CD8-positive, alpha-beta T cell (primary cell): ENCODE measurements at regions of chr9 and their contacts with region 1.

Region 1: GRCh38 chr9:20941174-20941690 is 90.2 kb downstream of the HACD4 start:
- DNase-seq: peak; percentile 4 to 80 (median 45)
- ATAC-seq: peak; percentile 90
- H3K4me3 ChIP-seq: no peak overlapping the region
- H3K4me3 Mint-ChIP-seq: no peak overlapping the region
- H3K27ac ChIP-seq: no peak overlapping the region
- H3K27ac Mint-ChIP-seq: no peak overlapping the region
- H3K4me1 ChIP-seq: peaks cover 3% of the 10 kb centered on the region
- H3K4me1 Mint-ChIP-seq: peaks cover 3% of the 10 kb centered on the region
- H3K27me3 ChIP-seq: no peaks in the 10 kb centered on the region
- H3K27me3 Mint-ChIP-seq: no peaks in the 10 kb centered on the region
- CTCF ChIP-seq: peak; percentile 82

Region 2: DNA sequence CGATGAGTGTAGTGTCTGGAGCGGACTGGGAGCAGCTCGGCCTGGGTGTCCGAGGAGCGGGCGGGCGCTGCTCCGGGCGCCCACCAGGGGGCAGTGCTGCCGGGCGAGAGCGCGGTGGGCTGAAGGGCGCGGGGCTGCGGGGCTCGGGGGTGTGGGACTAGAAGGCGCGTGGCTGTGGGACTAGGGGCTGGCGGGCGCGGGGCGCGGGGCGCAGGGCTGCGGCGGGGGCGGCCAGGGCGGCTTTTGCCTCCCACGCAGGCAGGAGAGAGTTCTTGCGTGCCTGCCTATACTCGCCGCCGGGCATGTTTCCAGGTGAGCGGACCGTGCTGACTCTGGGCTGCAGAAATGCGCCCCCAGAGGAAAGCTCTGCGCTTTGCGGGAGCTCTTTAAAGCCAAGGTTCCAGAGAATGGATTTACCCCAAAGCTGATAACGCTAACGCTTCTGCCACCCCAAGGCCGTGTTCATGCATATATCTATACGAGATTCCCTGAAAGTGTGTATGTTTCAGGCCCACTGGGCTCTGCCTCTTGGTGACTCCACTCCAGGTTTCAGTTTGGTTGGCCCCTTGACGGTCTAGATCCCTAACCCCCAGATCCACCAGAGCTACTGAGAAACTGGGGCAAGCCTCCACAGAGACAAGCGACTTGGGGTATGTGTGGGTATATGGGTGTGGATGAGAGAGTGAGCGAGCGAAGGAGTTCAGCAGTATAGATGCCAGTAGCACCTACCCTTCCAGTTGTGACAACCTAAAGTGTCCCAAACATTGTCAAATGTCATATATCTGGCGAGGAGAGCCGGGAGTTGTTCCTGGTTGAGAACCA is 1476.3 kb before region 1 on chr9:
- CTCF ChIA-PET with region 1: interaction called, 3 read pairs
- POLR2A ChIA-PET with region 1: no interaction called
- intact Hi-C with region 1: loop called in 1 of 2 experiments (anchors 10 kb)
- DNase-seq: peak; percentile 44 to 83 (median 71)
- ATAC-seq: peak; percentile 91
- H3K4me3 ChIP-seq: peak overlapping the region; percentile 35 to 56
- H3K4me3 Mint-ChIP-seq: peak overlapping the region; percentile 89
- H3K27ac ChIP-seq: no peak overlapping the region
- H3K27ac Mint-ChIP-seq: no peak overlapping the region
- H3K4me1 ChIP-seq: peaks cover 7% of the 10 kb centered on the region
- H3K4me1 Mint-ChIP-seq: peaks cover 10% of the 10 kb centered on the region
- H3K27me3 ChIP-seq: no peaks in the 10 kb centered on the region
- H3K27me3 Mint-ChIP-seq: peaks cover 2% of the 10 kb centered on the region
- CTCF ChIP-seq: peak; percentile 80

Region 3: GRCh38 chr9:20191228-20191840 is 749.9 kb before region 1 on chr9:
- CTCF ChIA-PET with region 1: interaction called, 3 read pairs
- POLR2A ChIA-PET with region 1: no interaction called
- intact Hi-C with region 1: loop called in 1 of 2 experiments (anchors 1 kb)
- DNase-seq: no peak
- ATAC-seq: no peak
- H3K4me3 ChIP-seq: no peak overlapping the region
- H3K4me3 Mint-ChIP-seq: no peak overlapping the region
- H3K27ac ChIP-seq: no peak overlapping the region
- H3K27ac Mint-ChIP-seq: no peak overlapping the region
- H3K4me1 ChIP-seq: no peaks in the 10 kb centered on the region
- H3K4me1 Mint-ChIP-seq: no peaks in the 10 kb centered on the region
- H3K27me3 ChIP-seq: no peaks in the 10 kb centered on the region
- H3K27me3 Mint-ChIP-seq: no peaks in the 10 kb centered on the region
- CTCF ChIP-seq: no peak

Region 4: DNA sequence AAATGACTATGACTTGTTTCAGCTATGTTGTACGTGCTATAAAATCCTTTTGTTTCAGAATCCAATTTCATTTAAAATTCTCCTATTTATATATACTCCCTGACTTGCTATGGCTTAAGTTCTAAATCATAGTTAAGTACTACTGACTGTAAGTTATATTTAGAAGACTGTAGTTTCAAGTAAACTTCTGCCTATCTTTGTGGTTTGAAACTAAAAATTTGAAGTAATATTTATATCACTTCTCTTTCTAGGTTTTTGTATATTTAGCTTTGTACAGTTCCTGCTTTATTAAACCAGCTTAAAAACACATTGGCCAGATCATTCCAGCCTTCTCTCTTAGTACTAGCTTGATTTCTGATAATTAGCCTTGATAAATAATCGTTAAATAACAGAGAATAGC is 515.2 kb before region 1 on chr9:
- CTCF ChIA-PET with region 1: interaction called, 3 read pairs
- POLR2A ChIA-PET with region 1: no interaction called
- intact Hi-C with region 1: loop called in 1 of 2 experiments (anchors 5 kb)
- DNase-seq: no peak
- ATAC-seq: no peak
- H3K4me3 ChIP-seq: no peak overlapping the region
- H3K4me3 Mint-ChIP-seq: no peak overlapping the region
- H3K27ac ChIP-seq: no peak overlapping the region
- H3K27ac Mint-ChIP-seq: no peak overlapping the region
- H3K4me1 ChIP-seq: no peaks in the 10 kb centered on the region
- H3K4me1 Mint-ChIP-seq: peaks cover 32% of the 10 kb centered on the region
- H3K27me3 ChIP-seq: no peaks in the 10 kb centered on the region
- H3K27me3 Mint-ChIP-seq: no peaks in the 10 kb centered on the region
- CTCF ChIP-seq: no peak

Region 5: GRCh38 chr9:20929276-20929675 is 12.0 kb before region 1 on chr9:
- CTCF ChIA-PET with region 1: interaction called, 33 read pairs
- POLR2A ChIA-PET with region 1: no interaction called
- intact Hi-C with region 1: no loop called
- DNase-seq: no peak
- ATAC-seq: no peak
- H3K4me3 ChIP-seq: no peak overlapping the region
- H3K4me3 Mint-ChIP-seq: no peak overlapping the region
- H3K27ac ChIP-seq: no peak overlapping the region
- H3K27ac Mint-ChIP-seq: no peak overlapping the region
- H3K4me1 ChIP-seq: no peaks in the 10 kb centered on the region
- H3K4me1 Mint-ChIP-seq: peaks cover 9% of the 10 kb centered on the region
- H3K27me3 ChIP-seq: no peaks in the 10 kb centered on the region
- H3K27me3 Mint-ChIP-seq: no peaks in the 10 kb centered on the region
- CTCF ChIP-seq: no peak

Region 6: DNA sequence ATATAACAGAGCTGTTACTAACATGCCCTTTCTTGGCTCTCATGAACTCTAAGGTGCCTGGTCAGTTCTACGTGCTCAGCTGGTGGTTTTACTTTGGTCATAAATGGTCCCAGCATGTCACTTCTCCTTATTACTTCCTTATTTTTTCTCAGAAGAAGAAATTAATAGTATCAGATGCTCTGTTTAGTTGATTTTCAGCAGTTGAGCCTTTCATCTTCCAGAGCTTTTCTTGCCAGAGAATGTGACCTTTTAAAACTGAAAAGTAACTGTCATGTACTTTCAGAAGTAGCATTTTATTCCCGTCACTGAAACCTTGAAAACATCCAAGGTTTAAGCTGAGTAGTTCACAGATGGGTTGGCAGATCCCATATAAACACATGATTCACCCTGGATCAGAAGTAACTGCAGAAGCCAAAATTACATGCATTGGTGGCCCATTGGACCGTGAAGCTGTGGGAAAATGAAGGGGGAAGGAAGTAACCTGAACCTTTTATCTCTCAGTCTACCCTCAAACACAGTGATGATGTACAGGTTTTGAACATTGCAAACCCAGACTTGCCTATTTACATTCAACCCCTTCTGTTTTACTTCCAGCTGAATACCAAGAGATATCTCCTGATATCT is 39.7 kb after region 1 on chr9:
- CTCF ChIA-PET with region 1: no interaction called
- POLR2A ChIA-PET with region 1: no interaction called
- intact Hi-C with region 1: no loop called
- DNase-seq: no peak
- ATAC-seq: no peak
- H3K4me3 ChIP-seq: no peak overlapping the region
- H3K4me3 Mint-ChIP-seq: no peak overlapping the region
- H3K27ac ChIP-seq: no peak overlapping the region
- H3K27ac Mint-ChIP-seq: no peak overlapping the region
- H3K4me1 ChIP-seq: no peaks in the 10 kb centered on the region
- H3K4me1 Mint-ChIP-seq: peaks cover 4% of the 10 kb centered on the region
- H3K27me3 ChIP-seq: no peaks in the 10 kb centered on the region
- H3K27me3 Mint-ChIP-seq: no peaks in the 10 kb centered on the region
- CTCF ChIP-seq: no peak

Region 7: DNA sequence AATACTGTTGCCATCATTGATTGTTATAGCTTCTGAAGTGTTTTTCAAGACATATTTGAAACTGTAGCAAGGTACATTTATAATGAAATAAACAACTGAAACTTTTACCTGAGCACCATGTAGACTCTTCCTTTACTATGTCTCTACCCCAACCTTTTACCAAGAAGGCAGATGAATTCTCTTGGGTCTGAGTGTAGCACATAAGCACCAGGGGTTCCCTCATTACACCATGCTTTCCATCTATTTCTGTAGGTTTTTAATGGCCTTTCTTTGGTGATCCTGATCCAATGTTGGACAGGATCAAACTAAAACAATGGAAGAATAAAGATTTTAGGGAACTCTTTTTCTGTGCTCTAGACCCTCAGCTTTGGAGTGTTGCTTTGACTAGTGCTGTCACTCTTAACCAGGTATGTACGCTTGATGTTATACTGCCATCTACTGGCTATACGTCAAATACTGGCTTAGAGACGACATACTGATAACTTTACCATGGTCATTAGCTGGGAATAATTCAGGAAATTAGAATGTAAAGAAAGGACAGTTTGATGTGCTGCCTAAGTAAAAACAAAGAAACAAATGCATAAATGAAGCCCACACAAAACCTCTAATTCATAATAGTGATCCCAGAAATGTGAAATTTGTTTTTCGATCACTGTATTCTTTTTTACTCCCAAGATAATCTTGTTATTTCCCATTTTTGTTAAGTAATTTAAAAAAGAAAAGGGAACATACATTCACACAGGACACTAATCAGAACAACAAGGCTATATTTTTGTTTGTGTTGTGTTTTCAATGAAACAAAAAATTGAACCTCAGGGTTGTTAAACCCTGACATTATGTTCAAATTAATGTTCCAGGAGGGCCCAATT is 169.7 kb after region 1 on chr9:
- CTCF ChIA-PET with region 1: interaction called, 40 read pairs
- POLR2A ChIA-PET with region 1: interaction called, 3 read pairs
- intact Hi-C with region 1: loop called (anchors 1 kb)
- DNase-seq: peak in 3 of 9 experiments; percentile 19 to 85 (median 78)
- ATAC-seq: peak; percentile 92
- H3K4me3 ChIP-seq: no peak overlapping the region
- H3K4me3 Mint-ChIP-seq: no peak overlapping the region
- H3K27ac ChIP-seq: no peak overlapping the region
- H3K27ac Mint-ChIP-seq: no peak overlapping the region
- H3K4me1 ChIP-seq: no peaks in the 10 kb centered on the region
- H3K4me1 Mint-ChIP-seq: no peaks in the 10 kb centered on the region
- H3K27me3 ChIP-seq: no peaks in the 10 kb centered on the region
- H3K27me3 Mint-ChIP-seq: peaks cover 2% of the 10 kb centered on the region
- CTCF ChIP-seq: peak; percentile 95